AG04449 (cell line): ENCODE measurements at regions of chr19 and their contacts with region 1.

Region 1: DNA sequence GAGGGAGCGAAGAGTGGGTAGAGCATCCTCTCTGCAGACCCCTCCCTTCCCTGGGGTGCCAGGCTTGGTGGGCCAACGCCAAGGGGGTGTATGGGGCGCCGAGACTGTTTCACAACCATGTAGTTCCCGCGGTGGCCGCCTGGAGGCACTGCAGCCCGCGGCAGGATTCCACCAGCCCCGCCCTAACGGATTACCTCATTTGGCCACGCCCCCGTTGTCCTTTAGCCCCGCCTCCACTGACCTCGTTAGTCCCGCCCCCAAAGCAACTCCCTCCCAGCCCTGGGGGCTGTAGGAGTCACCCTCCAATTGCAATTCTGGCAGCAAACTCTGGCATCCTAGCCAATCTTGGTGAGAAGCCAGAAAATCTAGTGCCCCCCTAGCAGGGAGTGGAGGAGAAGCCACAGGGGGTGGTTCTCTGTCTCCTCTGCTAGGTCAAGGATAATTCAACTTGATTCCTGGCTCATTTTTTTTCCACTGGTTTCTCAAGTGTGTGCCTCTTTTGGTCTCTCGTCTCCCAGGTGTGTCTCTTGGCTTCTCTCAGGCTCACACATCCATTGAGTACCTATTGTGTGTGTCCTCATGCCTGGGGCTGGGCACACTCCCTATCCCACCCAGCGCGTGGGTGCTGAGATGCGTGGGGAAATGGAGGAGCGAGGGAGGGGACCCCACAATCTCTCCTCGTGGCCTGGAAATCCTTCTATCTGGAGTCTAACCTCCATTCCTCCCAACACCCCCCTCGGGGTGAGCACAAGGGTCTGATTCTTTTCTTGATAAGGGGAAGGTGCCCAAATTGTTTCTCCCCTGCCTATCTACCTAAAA is 2.0 kb downstream of the OLFM2 start:
- DNase-seq: no peak
- H3K4me3 ChIP-seq: peak overlapping the region; percentile 63
- CTCF ChIP-seq: peak; percentile 95

Region 2: GRCh38 chr19:9834726-9835506 is 99.4 kb before region 1 on chr19 and contains the start of gene PIN1:
- CTCF ChIA-PET with region 1: no interaction called
- POLR2A ChIA-PET with region 1: no interaction called
- DNase-seq: peak; percentile 82
- H3K4me3 ChIP-seq: peak within 1 kb of the TSS; percentile 88
- CTCF ChIP-seq: peak; percentile 72

Region 3: DNA sequence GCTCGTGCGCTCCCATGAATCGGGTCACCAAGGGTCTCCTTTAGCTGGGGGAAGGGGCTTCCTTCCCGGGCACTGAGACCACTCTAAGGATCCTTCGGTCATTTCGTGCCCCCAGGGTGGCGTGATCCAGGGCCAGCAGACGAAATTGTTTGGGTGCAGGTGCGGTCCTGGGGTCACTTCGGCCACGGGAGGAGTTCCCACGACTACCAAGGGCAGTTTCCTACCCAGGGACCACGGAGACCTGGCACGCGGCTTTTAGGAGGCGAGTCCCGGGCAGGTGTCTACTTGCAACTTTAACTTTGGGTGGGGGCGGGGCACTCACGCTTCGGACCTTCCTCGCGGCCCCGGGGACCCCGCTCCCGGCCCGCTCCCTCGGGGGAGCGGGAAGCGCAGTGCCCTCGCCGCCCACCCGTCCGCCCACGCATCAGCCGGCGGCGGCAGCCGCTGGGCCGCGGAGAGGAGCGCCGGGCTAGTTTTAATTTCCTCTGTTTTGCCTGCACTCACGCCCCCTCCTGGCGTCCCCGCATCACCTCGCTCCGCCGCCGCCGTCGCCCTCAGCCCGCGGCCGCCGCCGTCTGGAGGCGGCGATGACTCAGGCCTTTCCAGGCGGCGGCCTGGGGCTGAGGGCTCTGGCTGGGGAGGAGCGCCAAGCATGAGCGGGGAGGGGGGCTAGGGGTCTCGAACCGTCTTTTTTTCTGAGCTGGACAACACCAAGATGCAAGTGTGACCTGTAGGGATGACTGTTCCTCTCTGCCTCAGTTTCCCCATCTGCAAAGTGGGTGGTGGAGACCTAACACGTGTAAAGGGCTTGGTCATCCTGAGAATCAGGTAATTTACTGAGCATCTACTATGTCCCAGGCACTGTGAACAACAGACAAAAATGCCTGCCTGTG is 19.8 kb before region 1 on chr19:
- CTCF ChIA-PET with region 1: interaction called, 24 read pairs
- POLR2A ChIA-PET with region 1: no interaction called
- DNase-seq: peak; percentile 19
- H3K4me3 ChIP-seq: peak overlapping the region; percentile 58
- CTCF ChIP-seq: peak; percentile 74

Region 4: GRCh38 chr19:10018263-10018662 is 83.9 kb after region 1 on chr19:
- CTCF ChIA-PET with region 1: interaction called, 37 read pairs
- POLR2A ChIA-PET with region 1: no interaction called
- DNase-seq: no peak
- H3K4me3 ChIP-seq: no peak overlapping the region
- CTCF ChIP-seq: no peak

Region 5: GRCh38 chr19:10036601-10037071 is 102.3 kb after region 1 on chr19:
- CTCF ChIA-PET with region 1: interaction called, 200 read pairs
- POLR2A ChIA-PET with region 1: no interaction called
- DNase-seq: no peak
- H3K4me3 ChIP-seq: no peak overlapping the region
- CTCF ChIP-seq: no peak

Region 6: GRCh38 chr19:10106100-10106936 is 172.0 kb after region 1 on chr19 and contains the start of gene PPAN:
- CTCF ChIA-PET with region 1: interaction called, 11 read pairs
- POLR2A ChIA-PET with region 1: no interaction called
- DNase-seq: peak; percentile 83
- H3K4me3 ChIP-seq: peak within 1 kb of the TSS; percentile 86
- CTCF ChIP-seq: no peak

Region 7: DNA sequence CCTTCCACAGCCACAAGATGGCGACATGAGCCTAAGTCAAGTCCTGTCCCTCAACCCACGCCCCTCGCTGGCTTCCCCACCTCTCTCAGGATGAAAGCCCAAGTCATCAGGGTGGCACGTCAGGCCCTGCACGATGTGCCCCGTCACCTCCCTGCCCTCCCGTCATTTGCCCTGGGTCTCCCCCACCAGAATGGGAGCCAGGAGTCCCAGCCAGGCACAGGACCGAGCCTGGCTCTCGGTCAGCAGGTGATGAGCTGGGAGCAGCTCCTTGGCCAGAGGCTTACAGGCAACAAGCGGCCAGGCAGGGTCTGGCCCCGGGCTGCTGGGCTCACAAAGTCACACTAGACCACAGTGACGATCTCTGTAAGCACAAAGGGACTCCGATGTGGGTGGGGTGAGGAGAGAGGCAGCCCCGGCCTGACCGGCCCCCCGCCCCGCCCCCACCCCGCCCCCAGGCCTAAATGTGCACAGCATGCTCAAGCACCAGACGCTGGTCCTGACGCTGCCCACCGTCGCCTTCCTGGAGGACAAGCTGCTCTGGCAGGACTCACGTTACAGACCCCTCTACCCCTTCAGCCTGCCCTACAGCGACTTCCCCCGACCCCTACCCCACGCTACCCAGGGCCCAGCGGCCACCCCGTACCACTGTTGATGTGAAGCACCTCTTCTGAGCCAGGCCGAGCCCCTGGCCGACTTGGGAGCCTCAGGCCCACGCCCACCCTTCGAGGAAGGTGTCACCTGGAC is 325.0 kb after region 1 on chr19:
- CTCF ChIA-PET with region 1: interaction called, 20 read pairs
- POLR2A ChIA-PET with region 1: no interaction called
- DNase-seq: no peak
- H3K4me3 ChIP-seq: no peak overlapping the region
- CTCF ChIP-seq: peak; percentile 71